Activated CD4-positive, alpha-beta memory T cell treated with anti-CD3 and anti-CD28 coated beads for 36 hours (primary cell): ENCODE measurements at regions of chr19 and their contacts with region 1.

Region 1: DNA sequence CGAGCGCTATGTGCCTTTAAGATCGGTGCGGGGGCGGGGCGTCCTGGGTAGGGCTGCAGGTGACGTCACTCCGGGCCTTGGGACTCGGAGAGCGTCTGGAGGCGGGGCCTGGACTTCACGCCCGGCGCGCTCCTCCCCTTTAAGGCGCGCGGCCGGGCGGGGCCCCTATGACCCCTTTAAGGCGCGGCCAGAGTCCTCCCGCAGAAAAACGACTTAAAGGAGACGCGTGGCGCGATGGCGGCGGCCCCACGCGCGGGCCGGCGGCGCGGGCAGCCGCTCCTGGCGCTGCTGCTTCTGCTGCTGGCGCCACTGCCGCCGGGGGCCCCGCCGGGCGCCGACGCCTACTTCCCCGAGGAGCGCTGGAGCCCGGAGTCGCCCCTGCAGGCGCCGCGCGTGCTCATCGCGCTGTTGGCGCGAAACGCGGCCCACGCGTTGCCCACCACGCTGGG is at the start of gene COLGALT1:
- DNase-seq: peak; percentile 99
- H3K4me3 Mint-ChIP-seq: peak within 1 kb of the TSS; percentile 84
- H3K27ac Mint-ChIP-seq: peak within 1 kb of the TSS; percentile 65
- H3K4me1 Mint-ChIP-seq: peaks cover 10% of the 10 kb centered on the region
- H3K27me3 Mint-ChIP-seq: no peaks in the 10 kb centered on the region
- total RNA-seq, gene COLGALT1: 46.6 to 46.8 TPM

Region 2: DNA sequence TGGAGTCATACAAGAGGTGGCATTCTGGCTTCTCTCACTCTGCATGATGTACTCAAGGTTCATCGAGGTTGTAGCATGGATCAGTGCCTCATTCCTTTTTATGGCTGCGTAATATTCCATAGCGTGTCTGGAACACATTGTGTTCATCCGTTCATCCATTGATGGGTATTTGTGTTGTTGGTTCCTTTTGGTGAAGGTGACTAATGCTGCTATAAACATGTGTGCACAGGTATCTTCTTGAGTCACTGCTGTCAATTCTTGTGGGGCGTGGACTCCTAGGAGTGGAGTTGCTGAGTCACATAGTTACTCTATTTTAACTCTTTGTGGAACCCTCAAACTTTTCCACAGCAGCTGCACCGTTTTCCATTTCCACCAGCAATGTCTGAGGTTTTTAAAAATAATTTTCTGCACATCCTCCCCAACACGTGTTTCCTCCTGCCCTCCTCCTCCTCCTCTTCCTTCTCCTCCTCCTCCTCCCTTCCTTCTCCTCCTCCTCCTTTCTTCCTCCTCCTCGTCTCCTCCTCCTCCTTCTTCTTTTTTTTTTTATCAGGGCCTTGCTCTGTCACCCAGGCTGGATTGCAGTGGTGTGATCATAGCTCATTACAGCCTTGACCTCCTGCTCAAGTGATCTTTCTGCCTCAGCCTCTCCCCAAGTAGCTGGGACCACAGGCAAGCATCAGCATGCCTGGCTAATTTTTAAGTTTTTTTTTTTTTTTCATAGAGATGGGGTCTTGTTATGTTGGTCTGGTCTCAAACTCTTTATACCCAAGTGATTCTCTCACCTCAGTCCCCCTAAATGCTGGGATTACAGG is 105.0 kb before region 1 on chr19:
- CTCF ChIA-PET with region 1: interaction called, 3 read pairs
- POLR2A ChIA-PET with region 1: no interaction called
- intact Hi-C with region 1: loop called (anchors 5 kb)
- DNase-seq: peak; percentile 73
- H3K4me3 Mint-ChIP-seq: peak overlapping the region; percentile 28
- H3K27ac Mint-ChIP-seq: peak overlapping the region; percentile 11
- H3K4me1 Mint-ChIP-seq: peaks cover 16% of the 10 kb centered on the region
- H3K27me3 Mint-ChIP-seq: peaks cover 24% of the 10 kb centered on the region

Region 3: DNA sequence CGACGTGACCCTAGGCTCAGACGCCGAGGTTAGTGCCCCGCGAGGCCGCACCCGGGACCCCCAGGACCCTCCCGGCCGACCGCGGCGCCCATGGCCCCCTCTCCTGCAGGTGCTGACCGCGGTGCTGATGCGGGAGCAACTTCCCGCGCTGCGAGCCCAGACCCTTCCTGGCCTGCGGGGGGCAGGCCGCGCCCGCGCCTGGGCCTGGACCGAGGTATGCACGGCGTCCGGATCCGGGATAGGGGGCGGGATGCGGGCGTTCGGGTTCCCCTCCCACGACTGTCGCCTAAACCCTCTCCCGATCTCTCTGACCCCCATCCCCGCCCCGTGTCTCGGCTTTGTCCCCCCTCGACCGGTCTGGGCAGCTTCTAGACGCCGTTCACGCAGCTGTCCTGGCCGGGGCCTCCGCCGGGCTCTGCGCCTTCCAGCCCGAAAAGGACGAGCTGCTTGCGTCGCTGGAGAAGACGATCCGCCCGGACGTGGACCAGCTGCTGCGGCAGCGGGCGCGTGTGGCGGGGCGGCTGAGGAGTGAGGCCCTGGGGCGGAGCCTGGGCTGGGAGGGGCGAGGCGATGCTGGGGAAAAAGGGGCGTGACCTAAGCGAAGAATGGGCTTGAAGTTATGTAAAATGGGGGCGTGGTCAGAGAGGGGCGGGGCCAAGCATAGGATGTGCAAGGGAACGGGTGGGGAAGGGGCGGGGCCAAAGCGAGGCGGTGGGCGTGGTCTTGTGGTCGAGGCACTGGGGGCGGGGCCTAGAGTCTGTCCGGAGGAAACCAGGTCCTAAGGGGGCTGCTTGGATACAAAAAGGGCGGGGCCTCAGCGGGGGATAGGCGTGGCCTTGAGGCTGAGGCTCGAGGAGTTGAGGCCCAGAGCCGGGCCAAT is 16.0 kb before region 1 on chr19:
- CTCF ChIA-PET with region 1: interaction called, 3 read pairs
- POLR2A ChIA-PET with region 1: no interaction called
- intact Hi-C with region 1: loop called (anchors 1 kb)
- DNase-seq: peak; percentile 98
- H3K4me3 Mint-ChIP-seq: peak overlapping the region; percentile 74
- H3K27ac Mint-ChIP-seq: peak overlapping the region; percentile 58
- H3K4me1 Mint-ChIP-seq: peaks cover 12% of the 10 kb centered on the region
- H3K27me3 Mint-ChIP-seq: peaks cover 3% of the 10 kb centered on the region

Region 4: DNA sequence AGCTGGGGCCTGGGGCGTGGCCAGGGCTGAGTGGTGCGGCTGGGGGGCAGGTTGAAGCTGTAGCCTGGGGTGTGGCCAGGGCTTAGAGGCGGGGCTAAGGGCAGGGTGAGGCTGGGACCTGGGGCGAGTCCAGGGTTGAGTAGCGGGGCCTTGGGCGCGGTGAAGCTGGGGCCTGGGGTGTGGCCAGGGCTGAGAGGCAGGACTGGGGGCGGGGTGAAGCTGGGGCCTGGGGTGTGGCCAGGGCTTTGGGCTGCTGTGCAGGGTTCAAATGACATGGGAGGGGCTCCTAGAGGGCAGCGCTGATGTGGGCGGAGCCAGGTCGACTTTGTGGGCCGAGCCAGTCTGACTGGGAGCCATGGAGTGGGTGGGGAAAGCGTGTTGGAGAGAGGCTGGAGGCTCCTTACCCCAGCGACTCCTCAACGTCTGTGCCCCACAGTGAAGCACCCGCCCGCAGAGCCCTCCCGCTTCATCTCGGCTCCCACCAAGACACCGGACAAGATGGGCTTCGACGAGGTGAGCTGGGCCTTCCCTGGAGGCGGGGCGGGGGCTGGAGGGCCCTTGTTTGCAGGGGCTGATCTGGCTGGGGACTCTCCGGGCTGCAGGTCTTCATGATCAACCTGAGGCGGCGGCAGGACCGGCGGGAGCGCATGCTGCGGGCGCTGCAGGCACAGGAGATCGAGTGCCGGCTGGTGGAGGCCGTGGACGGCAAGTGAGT is 21.4 kb after region 1 on chr19:
- CTCF ChIA-PET with region 1: interaction called, 12 read pairs
- POLR2A ChIA-PET with region 1: no interaction called
- intact Hi-C with region 1: no loop called
- DNase-seq: peak; percentile 43
- H3K4me3 Mint-ChIP-seq: no peak overlapping the region
- H3K27ac Mint-ChIP-seq: no peak overlapping the region
- H3K4me1 Mint-ChIP-seq: no peaks in the 10 kb centered on the region
- H3K27me3 Mint-ChIP-seq: no peaks in the 10 kb centered on the region